ENCODE measurements at regions of chr6 and their contacts with region 1.

Region 1: DNA sequence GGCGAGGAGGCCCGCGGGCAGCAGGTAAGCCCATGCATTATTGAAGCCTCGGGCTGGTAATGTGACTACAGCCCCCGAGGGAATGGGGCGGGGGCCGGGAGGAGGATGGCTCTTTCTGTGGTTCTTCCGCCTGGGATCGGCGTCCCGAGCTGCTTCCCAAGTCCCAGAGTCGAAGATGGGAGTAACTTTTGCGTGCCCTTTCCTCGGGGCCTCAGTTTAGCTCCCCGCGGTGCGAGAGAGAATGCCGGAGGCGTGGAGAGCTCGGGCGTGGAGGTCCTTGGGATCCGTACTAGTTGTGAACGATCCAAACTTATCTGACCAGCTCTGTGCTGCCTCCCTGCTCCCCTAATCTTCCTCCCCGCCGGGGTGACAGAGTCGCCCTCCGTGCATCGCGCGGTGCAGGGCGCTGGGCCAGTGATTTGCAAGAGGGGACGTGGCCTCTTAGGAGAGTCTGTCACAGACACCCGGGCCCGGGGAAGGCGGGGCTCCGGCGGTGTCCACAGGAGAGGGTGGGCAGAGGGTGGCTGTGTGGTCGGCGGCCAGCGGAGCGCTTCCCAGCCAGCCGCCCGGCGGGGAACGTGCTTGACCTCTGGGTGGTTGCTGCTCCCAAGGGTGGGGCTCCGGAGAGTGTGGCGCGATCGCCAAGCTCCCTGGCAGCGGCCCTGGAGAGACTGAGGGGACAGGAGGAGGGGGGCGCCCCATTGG is 815 bp downstream of the UTRN start:
- DNase-seq: no peak
- H3K4me3 ChIP-seq: peak overlapping the region; percentile 74
- H3K27me3 ChIP-seq: no peaks in the 10 kb centered on the region
- CTCF ChIP-seq: no peak

Region 2: DNA sequence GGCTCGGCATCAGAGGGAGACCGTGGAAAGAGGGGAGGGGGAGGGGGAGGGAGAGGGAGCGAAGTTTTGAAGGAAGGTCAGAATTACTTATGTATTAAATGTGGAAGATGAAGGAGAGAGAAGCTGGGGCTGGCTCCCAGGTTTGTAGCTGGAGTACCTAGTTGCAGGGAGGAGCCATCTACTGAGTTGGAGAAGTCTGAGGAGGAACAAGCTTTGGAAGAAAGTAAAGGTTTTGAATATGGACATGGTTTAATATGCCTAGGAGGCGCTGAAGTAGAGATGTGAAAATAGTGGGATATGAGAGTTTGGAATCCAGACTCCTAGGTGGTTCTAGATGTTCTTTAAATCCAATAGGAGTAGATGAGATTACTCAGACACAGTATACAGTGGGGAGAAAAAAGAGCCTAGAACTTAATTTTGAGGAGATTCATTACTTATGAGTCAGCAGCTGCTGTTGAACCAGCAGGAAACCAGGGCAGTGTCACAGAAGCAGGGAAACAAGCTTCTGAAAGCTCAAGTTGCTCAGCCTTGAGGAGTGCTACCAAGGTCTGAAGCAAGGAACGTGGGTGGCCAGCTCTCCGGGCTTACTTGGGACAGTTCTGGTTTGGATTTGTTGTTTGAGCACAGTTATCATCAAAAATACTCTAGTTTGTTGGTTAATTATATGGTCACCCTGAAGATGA is 148.5 kb after region 1 on chr6:
- CTCF ChIA-PET with region 1: no interaction called
- POLR2A ChIA-PET with region 1: interaction called, 16 read pairs
- DNase-seq: peak; percentile 51
- H3K4me3 ChIP-seq: no peak overlapping the region
- H3K27me3 ChIP-seq: no peaks in the 10 kb centered on the region
- CTCF ChIP-seq: no peak

Region 3: DNA sequence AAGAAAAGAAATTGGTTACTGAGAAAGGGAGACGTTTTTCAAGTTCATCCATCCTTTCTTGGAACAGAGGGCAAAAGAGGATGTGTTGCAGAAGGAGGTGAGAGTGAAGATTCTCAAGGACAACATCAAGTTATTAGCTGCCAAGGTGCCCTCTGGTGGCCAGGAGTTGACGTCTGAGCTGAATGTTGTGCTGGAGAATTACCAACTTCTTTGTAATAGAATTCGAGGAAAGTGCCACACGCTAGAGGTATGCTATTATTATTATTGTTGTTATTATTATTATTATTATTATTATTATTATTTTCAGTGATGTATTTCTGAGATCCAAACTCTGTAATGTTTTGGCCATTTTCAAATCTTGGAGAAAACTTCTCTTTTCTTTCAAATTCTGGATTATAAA is 196.2 kb after region 1 on chr6:
- CTCF ChIA-PET with region 1: interaction called, 10 read pairs
- POLR2A ChIA-PET with region 1: no interaction called
- DNase-seq: peak; percentile 17
- H3K4me3 ChIP-seq: no peak overlapping the region
- H3K27me3 ChIP-seq: no peaks in the 10 kb centered on the region
- CTCF ChIP-seq: peak; percentile 68

Measured in BJ (cell line).